PC-9 (cell line): ENCODE measurements at regions of chr12 and their contacts with region 1.

Region 1: GRCh38 chr12:52969828-52970569 is 21.1 kb downstream of the KRT18 start:
- DNase-seq: peak; percentile 90 to 98
- H3K4me3 ChIP-seq: peak overlapping the region; percentile 28; the same call in 1 of the 2 replicates
- H3K27ac ChIP-seq: peak overlapping the region; percentile 99
- H3K4me1 ChIP-seq: peaks cover 67% of the 10 kb centered on the region
- H3K27me3 ChIP-seq: no peaks in the 10 kb centered on the region
- CTCF ChIP-seq: no peak

Region 2: GRCh38 chr12:52175371-52176350 is 794.3 kb before region 1 on chr12:
- CTCF ChIA-PET with region 1: no interaction called
- POLR2A ChIA-PET with region 1: no interaction called
- intact Hi-C with region 1: no loop called
- DNase-seq: no peak
- H3K4me3 ChIP-seq: no peak overlapping the region
- H3K27ac ChIP-seq: no peak overlapping the region
- H3K4me1 ChIP-seq: no peaks in the 10 kb centered on the region
- H3K27me3 ChIP-seq: no peaks in the 10 kb centered on the region
- CTCF ChIP-seq: no peak

Region 3: DNA sequence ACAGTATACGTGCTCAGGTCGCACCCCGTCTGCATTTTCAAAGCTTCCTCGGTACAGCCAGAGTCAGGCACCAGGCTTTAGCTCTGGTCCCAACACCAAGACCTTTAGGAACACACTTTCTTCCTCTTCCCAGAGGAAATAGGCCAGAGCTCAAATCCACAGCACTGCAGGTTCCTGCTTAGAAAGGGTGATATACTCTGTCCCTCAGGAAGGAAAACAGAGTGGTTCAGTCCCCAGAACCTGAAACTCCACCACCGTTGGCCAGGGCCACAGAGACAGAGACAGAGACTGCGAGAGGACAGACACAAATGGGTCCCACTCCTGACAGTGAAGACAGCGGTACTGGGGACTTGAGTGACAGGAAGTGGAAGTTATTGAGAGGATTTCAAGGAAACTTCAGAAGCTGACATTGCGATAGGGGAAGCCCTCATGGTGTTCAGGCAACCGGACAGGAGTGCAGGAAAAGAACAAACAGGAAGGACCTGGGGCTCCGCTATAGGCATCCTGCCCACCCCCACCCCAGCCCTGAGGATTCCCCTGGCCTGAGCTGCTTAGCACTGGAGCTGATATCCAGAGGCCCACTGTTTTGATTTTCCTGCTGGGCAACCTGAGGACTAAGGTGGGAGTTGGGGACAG is 59.6 kb before region 1 on chr12:
- CTCF ChIA-PET with region 1: interaction called, 20 read pairs
- POLR2A ChIA-PET with region 1: interaction called, 62 read pairs
- intact Hi-C with region 1: loop called (anchors 1 kb)
- DNase-seq: no peak
- H3K4me3 ChIP-seq: no peak overlapping the region
- H3K27ac ChIP-seq: peak overlapping the region; percentile 99; the same call in 1 of the 2 replicates
- H3K4me1 ChIP-seq: peaks cover 55% of the 10 kb centered on the region
- H3K27me3 ChIP-seq: no peaks in the 10 kb centered on the region
- CTCF ChIP-seq: no peak

Region 4: GRCh38 chr12:52956987-52957386 is 13.0 kb before region 1 on chr12:
- CTCF ChIA-PET with region 1: interaction called, 3 read pairs
- POLR2A ChIA-PET with region 1: interaction called, 48 read pairs
- intact Hi-C with region 1: loop called (anchors 1 kb)
- DNase-seq: peak in 1 of 2 experiments; percentile 94
- H3K4me3 ChIP-seq: no peak overlapping the region
- H3K27ac ChIP-seq: peak overlapping the region; percentile 65
- H3K4me1 ChIP-seq: peaks cover 24% of the 10 kb centered on the region
- H3K27me3 ChIP-seq: no peaks in the 10 kb centered on the region
- CTCF ChIP-seq: no peak

Region 5: DNA sequence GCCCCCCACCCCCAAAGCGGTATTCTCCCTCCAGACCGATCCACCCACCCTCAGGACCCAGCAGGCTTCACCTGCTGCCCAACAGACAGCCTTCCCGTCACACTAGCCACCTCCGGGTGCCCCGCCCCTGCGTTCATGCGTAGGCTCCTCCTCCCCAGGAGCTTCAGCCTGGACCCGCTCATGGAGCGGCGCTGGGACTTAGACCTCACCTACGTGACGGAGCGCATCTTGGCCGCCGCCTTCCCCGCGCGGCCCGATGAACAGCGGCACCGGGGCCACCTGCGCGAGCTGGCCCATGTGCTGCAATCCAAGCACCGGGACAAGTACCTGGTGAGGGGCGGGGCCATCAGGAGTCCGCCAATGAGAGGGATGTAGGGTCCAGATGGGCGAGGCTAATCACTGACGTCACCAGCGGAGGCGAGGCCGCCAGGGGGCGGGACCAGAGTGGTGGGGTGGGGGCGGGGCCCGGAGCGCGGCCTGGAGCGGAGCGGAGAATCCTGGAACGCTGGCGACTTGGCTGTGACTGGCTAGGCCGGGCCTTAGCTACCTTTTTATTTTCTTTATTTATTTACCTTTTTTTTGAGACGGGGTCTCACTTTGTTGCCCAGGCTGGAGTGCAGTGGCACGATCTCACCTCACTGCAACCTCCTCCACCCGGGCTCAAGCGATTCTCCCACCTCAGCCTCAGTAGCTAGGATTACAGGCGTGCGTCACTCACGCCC is 84.3 kb after region 1 on chr12:
- CTCF ChIA-PET with region 1: no interaction called
- POLR2A ChIA-PET with region 1: no interaction called
- intact Hi-C with region 1: no loop called
- DNase-seq: peak; percentile 87 to 94
- H3K4me3 ChIP-seq: peak overlapping the region; percentile 95
- H3K27ac ChIP-seq: peak overlapping the region; percentile 71
- H3K4me1 ChIP-seq: peaks cover 19% of the 10 kb centered on the region
- H3K27me3 ChIP-seq: no peaks in the 10 kb centered on the region
- CTCF ChIP-seq: no peak

Region 6: DNA sequence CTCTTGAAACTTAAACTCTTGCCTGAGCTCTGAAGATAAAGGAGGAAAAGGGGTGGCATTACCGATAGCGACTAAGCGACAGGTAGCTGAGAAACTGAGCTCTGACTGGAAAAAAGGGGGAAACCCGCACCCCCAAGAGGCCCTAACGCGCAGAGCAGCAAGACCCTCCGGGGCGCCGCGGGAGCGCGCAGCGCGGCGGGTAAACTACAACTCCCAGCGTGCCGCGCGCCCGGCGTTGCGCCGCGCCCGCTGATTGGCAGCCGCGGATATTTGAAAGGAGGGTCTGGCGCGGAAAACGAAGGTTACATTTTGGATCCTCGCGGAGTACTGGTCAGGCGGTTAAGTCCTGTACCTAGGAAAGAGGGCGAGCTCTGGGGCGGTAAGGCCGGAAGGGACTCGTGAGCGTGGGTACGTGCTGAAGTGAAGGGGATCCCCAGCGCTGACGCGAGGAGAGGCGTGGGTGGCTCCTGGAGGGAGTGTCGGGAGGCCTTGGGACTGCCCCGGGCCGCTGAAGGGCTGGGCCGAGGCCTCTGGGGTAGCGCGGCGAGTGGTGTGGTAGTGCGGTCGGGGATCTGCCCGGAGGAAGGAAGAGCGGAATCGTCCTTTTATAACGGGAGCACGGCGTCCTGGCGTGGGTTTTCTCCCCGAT is 298.1 kb after region 1 on chr12 and contains the start of gene ESPL1:
- CTCF ChIA-PET with region 1: no interaction called
- POLR2A ChIA-PET with region 1: no interaction called
- intact Hi-C with region 1: no loop called
- DNase-seq: peak; percentile 63 to 73
- H3K4me3 ChIP-seq: peak within 1 kb of the TSS; percentile 85
- H3K27ac ChIP-seq: no peak within 1 kb of the TSS
- H3K4me1 ChIP-seq: peaks cover 11% of the 10 kb centered on the region
- H3K27me3 ChIP-seq: no peaks in the 10 kb centered on the region
- CTCF ChIP-seq: no peak; the same call in 1 of the 2 replicates
- total RNA-seq, gene ESPL1: 37.4 and 42.0 TPM in 2 replicates